Activated CD8-positive, alpha-beta T cell treated with anti-CD3 and anti-CD28 coated beads for 36 hours (primary cell): ENCODE measurements at regions of chr13 and their contacts with region 1.

Region 1: GRCh38 chr13:80361883-80362327 is 21.0 kb upstream of the SPRY2 start:
- DNase-seq: no peak
- ATAC-seq: peak; percentile 53
- H3K4me3 Mint-ChIP-seq: no peak overlapping the region
- H3K27ac Mint-ChIP-seq: no peak overlapping the region
- H3K4me1 Mint-ChIP-seq: peaks cover 2% of the 10 kb centered on the region
- H3K27me3 Mint-ChIP-seq: peaks cover 5% of the 10 kb centered on the region
- CTCF ChIP-seq: no peak

Region 2: DNA sequence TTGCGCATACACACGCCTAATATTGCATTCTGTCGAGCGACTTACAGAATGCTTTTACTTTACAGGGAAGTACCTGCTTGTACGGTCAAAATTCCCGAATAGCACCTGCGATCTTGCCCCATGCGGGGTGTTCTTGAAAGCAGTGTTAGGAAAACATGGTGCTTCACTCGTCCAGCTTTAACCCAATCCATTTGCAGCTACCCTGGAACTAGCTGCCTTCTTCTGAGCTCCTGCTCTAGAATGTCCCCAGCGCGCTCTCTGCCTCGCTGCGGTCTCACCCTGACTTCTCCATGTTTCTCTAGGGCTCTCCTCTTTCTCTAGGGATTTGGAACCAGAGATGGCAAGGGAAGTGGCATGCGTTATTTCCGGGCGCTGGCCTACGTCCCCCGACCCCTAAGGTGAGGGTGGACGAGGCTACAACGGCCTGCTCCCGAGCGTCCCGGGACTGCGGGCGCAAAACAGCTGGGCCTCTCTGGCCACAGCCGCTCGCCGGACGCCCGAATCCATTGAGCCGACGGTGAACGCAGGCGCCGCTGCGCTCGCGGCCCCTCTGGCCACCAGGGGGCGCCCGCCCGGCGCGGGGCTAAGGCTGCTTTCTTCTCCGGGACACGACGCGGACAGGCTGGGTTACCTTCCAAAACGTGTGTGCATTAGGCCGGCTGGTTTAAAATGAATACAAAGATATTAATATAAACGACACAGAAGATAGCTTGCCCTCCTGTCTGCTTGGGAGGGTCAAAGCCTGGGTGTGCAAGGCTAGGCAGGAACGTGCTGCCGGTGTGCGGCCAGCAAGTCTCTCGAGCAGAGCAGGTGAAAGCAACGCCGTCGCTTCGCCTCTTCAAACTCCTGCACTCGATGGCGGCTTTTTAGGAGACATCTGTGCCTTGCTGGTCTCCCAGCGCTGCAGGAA is 19.2 kb before region 1 on chr13:
- CTCF ChIA-PET with region 1: interaction called, 14 read pairs
- POLR2A ChIA-PET with region 1: no interaction called
- intact Hi-C with region 1: no loop called
- DNase-seq: peak; percentile 69
- ATAC-seq: peak; percentile 59
- H3K4me3 Mint-ChIP-seq: peak overlapping the region; percentile 66
- H3K27ac Mint-ChIP-seq: no peak overlapping the region
- H3K4me1 Mint-ChIP-seq: peaks cover 21% of the 10 kb centered on the region
- H3K27me3 Mint-ChIP-seq: peaks cover 42% of the 10 kb centered on the region
- CTCF ChIP-seq: peak; percentile 95